Lower lobe of right lung (tissue), 2 donors: ENCODE measurements at regions of chr5 and their contacts with region 1.

Region 1: DNA sequence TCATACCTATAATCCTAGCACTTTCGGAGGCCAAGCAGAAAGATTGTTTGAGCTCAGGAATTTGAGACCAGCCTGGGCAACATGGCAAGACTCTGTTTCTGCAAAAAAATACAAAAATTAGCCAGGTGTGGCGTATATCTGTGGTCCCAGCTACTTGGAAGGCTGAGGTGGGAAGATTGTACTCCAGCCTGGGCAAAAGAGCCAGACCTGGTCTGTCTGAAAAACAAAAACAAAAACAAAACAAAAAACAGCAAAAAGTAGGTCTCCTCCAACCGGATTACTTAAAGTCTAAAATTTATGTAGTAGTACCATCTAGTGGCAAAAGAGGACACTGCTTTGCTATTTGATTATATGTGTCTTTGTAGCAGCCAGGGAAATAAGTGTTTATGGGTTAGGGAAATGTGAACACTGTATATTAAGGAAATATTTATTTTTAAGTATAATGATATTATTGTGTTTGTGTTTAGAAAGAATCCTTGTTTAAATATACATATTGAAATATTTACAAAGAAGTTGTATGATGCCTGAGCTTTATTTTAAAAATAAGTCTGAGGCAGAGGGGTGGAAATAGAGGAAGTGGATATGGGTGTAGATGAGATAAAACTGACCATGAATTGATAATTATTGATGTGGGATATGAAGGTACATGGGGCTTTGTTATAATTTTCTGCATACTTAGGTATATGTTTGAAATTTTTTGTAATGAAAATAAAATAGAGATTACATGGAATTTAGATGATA is 20.0 kb downstream of the APC start:
- DNase-seq: no peak
- ATAC-seq: peak; percentile 63 to 83
- H3K4me3 ChIP-seq: no peak overlapping the region
- H3K27ac ChIP-seq: no peak overlapping the region
- H3K4me1 ChIP-seq: no peaks in the 10 kb centered on the region
- H3K27me3 ChIP-seq: no peaks in the 10 kb centered on the region
- CTCF ChIP-seq: peak; percentile 84

Region 2: GRCh38 chr5:112551419-112552032 is 206.1 kb before region 1 on chr5:
- intact Hi-C with region 1: loop called (anchors 5 kb)
- DNase-seq: no peak
- ATAC-seq: peak; percentile 52 to 81
- H3K4me3 ChIP-seq: no peak overlapping the region
- H3K27ac ChIP-seq: no peak overlapping the region
- H3K4me1 ChIP-seq: no peaks in the 10 kb centered on the region
- H3K27me3 ChIP-seq: no peaks in the 10 kb centered on the region
- CTCF ChIP-seq: peak; percentile 81